PC-3 (cell line): ENCODE measurements at regions of chr3 and their contacts with region 1.

Region 1: DNA sequence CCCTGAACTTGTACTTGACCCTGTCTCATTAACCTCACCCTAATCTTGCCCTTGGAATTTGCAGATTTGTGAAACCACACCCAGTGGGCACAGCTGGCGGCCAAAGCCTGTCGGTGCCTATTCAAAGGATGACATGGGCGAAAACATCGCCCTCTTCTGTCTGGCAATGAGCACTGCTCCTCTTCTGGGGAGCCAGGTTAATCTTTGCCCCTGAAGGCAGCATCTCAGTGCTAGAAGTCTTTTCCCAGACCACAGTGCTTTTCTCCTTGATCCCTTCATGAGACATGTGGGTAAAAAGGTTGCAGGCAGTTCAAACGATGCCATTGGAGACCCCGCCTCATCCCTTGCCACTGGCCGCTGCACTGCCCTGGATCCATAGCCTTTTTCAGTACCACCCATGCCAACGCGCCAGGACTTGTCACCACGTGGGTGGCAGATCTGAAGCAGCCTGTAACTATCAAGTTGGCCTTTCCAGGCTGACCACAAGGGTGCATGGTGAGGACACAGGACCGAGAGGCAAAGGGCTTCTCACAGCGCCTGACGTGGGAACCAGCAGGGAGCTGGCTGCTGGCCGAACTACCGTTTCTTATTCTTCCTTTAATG is 6.5 kb upstream of the DNASE1L3 start:
- DNase-seq: peak; percentile 87
- ATAC-seq: peak; percentile 77
- H3K4me3 ChIP-seq: peak overlapping the region; percentile 46; the same call in 1 of the 2 replicates
- H3K27ac ChIP-seq: peak overlapping the region; percentile 82
- H3K4me1 ChIP-seq: peaks cover 60% of the 10 kb centered on the region
- H3K27me3 ChIP-seq: no peaks in the 10 kb centered on the region
- CTCF ChIP-seq: peak; percentile 95

Region 2: GRCh38 chr3:58041654-58042324 is 175.5 kb before region 1 on chr3:
- CTCF ChIA-PET with region 1: no interaction called
- POLR2A ChIA-PET with region 1: no interaction called
- intact Hi-C with region 1: no loop called
- DNase-seq: peak; percentile 31
- ATAC-seq: no peak
- H3K4me3 ChIP-seq: no peak overlapping the region
- H3K27ac ChIP-seq: peak overlapping the region; percentile 44
- H3K4me1 ChIP-seq: peaks cover 74% of the 10 kb centered on the region
- H3K27me3 ChIP-seq: no peaks in the 10 kb centered on the region
- CTCF ChIP-seq: no peak

Region 3: GRCh38 chr3:58237238-58237940 is 20.1 kb after region 1 on chr3 and contains the start of gene ABHD6:
- CTCF ChIA-PET with region 1: interaction called, 11 read pairs
- POLR2A ChIA-PET with region 1: no interaction called
- intact Hi-C with region 1: loop called (anchors 1 kb)
- DNase-seq: peak; percentile 66
- ATAC-seq: peak; percentile 72
- H3K4me3 ChIP-seq: peak within 1 kb of the TSS; percentile 99
- H3K27ac ChIP-seq: peak within 1 kb of the TSS; percentile 40
- H3K4me1 ChIP-seq: peaks cover 32% of the 10 kb centered on the region
- H3K27me3 ChIP-seq: no peaks in the 10 kb centered on the region
- CTCF ChIP-seq: peak; percentile 46; the same call in 1 of the 2 replicates
- total RNA-seq, gene ABHD6: 11.6 and 13.4 TPM in 2 replicates

Region 4: GRCh38 chr3:58260261-58260731 is 43.0 kb after region 1 on chr3:
- CTCF ChIA-PET with region 1: interaction called, 5 read pairs
- POLR2A ChIA-PET with region 1: no interaction called
- intact Hi-C with region 1: loop called (anchors 2 kb)
- DNase-seq: peak; percentile 96
- ATAC-seq: peak; percentile 99
- H3K4me3 ChIP-seq: peak overlapping the region; percentile 30; the same call in 1 of the 2 replicates
- H3K27ac ChIP-seq: peak overlapping the region; percentile 96
- H3K4me1 ChIP-seq: peaks cover 20% of the 10 kb centered on the region
- H3K27me3 ChIP-seq: no peaks in the 10 kb centered on the region
- CTCF ChIP-seq: no peak

Region 5: DNA sequence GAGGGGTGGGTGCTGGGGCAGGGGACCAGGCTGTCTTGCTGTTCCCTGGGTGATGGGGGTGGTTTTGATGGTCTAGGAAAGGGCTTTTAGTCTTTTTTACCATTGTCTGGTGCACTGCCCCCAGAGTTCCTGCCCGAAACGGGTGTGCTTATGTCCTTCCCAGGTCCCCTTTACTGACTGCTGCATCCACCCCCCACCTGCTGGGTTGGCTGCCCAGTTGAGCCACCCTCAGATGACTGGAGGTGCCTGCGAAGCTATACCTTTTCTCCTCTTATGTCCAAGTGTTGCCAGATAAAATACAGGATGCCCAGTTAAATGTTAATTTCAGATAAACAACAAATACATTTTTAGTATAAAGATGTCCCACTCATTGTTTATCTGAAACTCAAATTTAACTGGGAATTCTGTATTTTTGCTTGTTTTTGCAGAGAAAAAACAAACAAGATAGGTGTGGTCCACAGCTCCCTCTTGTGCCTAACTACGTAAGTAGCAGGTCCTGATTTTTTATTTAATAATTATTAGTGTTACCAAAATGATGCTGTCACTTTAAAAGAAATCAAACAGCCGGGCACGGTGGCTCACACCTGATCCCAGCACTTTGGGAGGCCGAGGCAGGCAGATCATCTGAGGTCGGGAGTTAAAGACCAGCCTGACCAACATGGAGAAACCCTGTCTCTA is 82.7 kb after region 1 on chr3:
- CTCF ChIA-PET with region 1: interaction called, 3 read pairs
- POLR2A ChIA-PET with region 1: no interaction called
- intact Hi-C with region 1: loop called (anchors 1 kb)
- DNase-seq: peak; percentile 61
- ATAC-seq: peak; percentile 61
- H3K4me3 ChIP-seq: no peak overlapping the region
- H3K27ac ChIP-seq: no peak overlapping the region
- H3K4me1 ChIP-seq: no peaks in the 10 kb centered on the region
- H3K27me3 ChIP-seq: no peaks in the 10 kb centered on the region
- CTCF ChIP-seq: peak; percentile 79